Right cardiac atrium (tissue), 5 donors: ENCODE measurements at regions of chr1 and their contacts with region 1.

Region 1: DNA sequence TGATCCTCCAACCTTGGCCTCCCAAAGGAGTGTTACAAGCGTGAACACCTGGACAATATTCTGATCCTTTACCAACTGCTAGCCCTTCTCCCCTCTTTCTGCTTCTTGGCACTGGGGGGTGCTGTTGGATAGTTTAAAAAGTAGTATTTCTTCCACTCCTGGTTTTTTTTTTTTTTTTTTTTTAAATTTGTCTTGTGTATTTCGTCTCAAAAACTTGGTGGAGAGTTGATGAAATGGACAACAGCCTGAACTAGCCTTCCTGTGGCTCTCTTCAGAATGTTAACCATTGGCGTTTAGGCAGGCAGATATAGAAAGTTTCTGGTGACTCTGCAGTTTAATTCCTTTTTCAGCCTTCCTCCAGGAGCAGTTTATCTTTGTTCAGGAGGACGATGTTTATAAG is 69.7 kb upstream of the USP24 start:
- DNase-seq: peak in 1 of 3 donors; percentile 57
- ATAC-seq: peak; percentile 71
- H3K4me3 ChIP-seq: no peak overlapping the region
- H3K27ac ChIP-seq: no peak overlapping the region
- H3K4me1 ChIP-seq: no peaks in the 10 kb centered on the region
- H3K27me3 ChIP-seq: no peaks in the 10 kb centered on the region

Region 2: GRCh38 chr1:56376188-56376984 is 1091.5 kb after region 1 on chr1:
- intact Hi-C with region 1: loop called in 1 of 4 experiments (anchors 10 kb)
- DNase-seq: peak; percentile 48 to 62 (median 55)
- ATAC-seq: peak; percentile 66 to 69
- H3K4me3 ChIP-seq: no peak overlapping the region
- H3K27ac ChIP-seq: no peak overlapping the region
- H3K4me1 ChIP-seq: peaks cover 7% of the 10 kb centered on the region
- H3K27me3 ChIP-seq: no peaks in the 10 kb centered on the region

Region 3: DNA sequence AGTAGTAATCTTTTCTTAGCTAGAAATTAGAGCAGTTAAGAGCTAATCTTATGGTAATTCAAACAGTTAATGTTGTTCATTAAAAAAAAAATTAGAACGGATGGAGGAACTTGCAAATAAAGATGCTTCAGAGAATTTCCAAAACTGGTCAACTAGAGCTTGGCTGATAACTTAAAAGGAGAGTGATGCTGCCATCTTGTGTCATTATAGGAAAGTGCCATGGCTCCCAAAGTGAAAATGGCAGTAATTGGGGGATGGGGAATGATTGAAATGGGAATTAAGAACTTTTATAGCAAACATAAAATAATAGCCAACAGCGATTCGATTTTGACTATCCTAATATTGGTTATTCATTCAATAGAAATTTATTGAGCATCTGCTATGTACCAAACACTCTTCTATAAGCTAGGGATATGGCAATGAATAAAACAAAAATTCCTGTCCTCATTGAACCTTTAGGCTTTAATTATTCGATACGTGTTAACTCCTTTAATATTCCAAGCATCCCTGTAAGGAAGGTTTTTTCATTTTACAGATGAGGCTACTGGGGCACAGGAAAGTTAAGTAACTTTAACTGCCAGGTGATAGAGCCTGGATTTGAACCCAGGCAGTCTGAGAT is 1300.2 kb after region 1 on chr1:
- intact Hi-C with region 1: loop called (anchors 5 kb)
- DNase-seq: no peak
- ATAC-seq: peak; percentile 54 to 67
- H3K4me3 ChIP-seq: no peak overlapping the region
- H3K27ac ChIP-seq: no peak overlapping the region
- H3K4me1 ChIP-seq: no peaks in the 10 kb centered on the region
- H3K27me3 ChIP-seq: no peaks in the 10 kb centered on the region

Region 4: GRCh38 chr1:56709269-56709880 is 1424.5 kb after region 1 on chr1:
- intact Hi-C with region 1: loop called in 1 of 4 experiments (anchors 10 kb)
- DNase-seq: no peak
- ATAC-seq: peak; percentile 68 to 73
- H3K4me3 ChIP-seq: no peak overlapping the region
- H3K27ac ChIP-seq: no peak overlapping the region
- H3K4me1 ChIP-seq: no peaks in the 10 kb centered on the region
- H3K27me3 ChIP-seq: no peaks in the 10 kb centered on the region

Region 5: GRCh38 chr1:56821140-56821797 is 1536.4 kb after region 1 on chr1:
- intact Hi-C with region 1: loop called in 2 of 4 experiments (anchors 10 kb)
- DNase-seq: peak; percentile 82 to 93 (median 91)
- ATAC-seq: peak; percentile 75 to 88
- H3K4me3 ChIP-seq: no peak overlapping the region
- H3K27ac ChIP-seq: no peak overlapping the region
- H3K4me1 ChIP-seq: peaks cover 3% of the 10 kb centered on the region
- H3K27me3 ChIP-seq: no peaks in the 10 kb centered on the region